BJ (cell line): ENCODE measurements at regions of chr4 and their contacts with region 1.

Region 1: GRCh38 chr4:112938461-112939058 is 110.9 kb upstream of the ANK2 start:
- DNase-seq: no peak
- H3K4me3 ChIP-seq: no peak overlapping the region
- H3K27me3 ChIP-seq: no peaks in the 10 kb centered on the region
- CTCF ChIP-seq: peak; percentile 69

Region 2: GRCh38 chr4:112853662-112854256 is 84.8 kb before region 1 on chr4:
- CTCF ChIA-PET with region 1: interaction called, 15 read pairs
- POLR2A ChIA-PET with region 1: no interaction called
- DNase-seq: no peak
- H3K4me3 ChIP-seq: no peak overlapping the region
- H3K27me3 ChIP-seq: no peaks in the 10 kb centered on the region; the same call in 1 of the 2 replicates
- CTCF ChIP-seq: peak; percentile 27

Region 3: DNA sequence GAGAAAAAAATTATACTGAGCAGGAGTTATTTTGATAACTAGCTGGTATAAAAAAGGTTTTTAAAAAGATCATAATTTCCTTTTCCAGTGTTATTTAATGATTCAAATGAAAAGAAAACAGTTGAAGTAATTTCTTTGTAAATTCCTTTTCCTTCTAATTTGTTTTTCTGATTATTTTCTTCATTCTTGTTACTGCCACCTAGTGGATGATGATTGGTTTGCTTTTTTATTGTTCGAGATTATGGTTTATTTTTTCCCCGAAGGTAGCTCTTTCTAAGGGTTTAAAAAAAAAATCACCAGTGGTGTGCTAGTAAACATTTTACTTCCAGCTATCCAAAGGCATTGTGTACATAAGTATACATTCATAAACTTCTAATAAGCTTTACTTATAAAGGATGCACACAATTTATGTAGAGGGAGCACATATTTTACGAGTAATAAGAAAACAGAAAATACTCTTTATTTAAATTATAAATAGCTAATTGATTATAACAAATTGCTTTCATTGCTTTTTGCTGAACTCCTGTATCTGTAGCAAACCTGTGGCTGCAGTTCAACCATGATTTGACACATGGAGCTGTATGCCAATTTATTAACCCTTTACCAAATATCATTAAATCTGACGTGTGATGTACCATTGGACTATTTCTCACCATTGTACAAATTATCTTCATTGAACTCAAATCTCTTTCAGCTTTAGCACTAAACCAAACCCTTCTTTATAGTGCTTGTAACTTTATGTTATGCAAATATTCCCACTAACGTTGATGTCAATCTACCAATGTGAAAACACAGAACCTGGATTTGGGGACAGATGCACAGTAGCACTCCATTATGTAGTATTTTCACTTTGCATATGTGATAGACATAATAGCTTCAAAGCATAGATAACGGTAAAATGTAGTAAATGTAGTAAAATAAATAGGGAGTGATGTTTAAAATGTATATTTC is 13.1 kb after region 1 on chr4:
- CTCF ChIA-PET with region 1: interaction called, 24 read pairs
- POLR2A ChIA-PET with region 1: no interaction called
- DNase-seq: no peak
- H3K4me3 ChIP-seq: no peak overlapping the region
- H3K27me3 ChIP-seq: no peaks in the 10 kb centered on the region
- CTCF ChIP-seq: peak; percentile 57